ENCODE measurements at regions of chr13 and their contacts with region 1.

Region 1: GRCh38 chr13:51797664-51798488 is 6.1 kb downstream of the DHRS12 start:
- DNase-seq: peak; percentile 83
- ATAC-seq: peak; percentile 69
- H3K4me3 ChIP-seq: no peak overlapping the region
- H3K27ac ChIP-seq: no peak overlapping the region
- H3K4me1 ChIP-seq: peaks cover 29% of the 10 kb centered on the region
- H3K27me3 ChIP-seq: no peaks in the 10 kb centered on the region
- CTCF ChIP-seq: peak; percentile 71

Region 2: GRCh38 chr13:51148952-51149573 is 648.8 kb before region 1 on chr13:
- CTCF ChIA-PET with region 1: interaction called, 5 read pairs
- POLR2A ChIA-PET with region 1: no interaction called
- intact Hi-C with region 1: loop called (anchors 5 kb)
- DNase-seq: peak; percentile 50
- ATAC-seq: peak; percentile 87
- H3K4me3 ChIP-seq: no peak overlapping the region
- H3K27ac ChIP-seq: no peak overlapping the region
- H3K4me1 ChIP-seq: no peaks in the 10 kb centered on the region
- H3K27me3 ChIP-seq: peaks cover 17% of the 10 kb centered on the region
- CTCF ChIP-seq: peak; percentile 72

Region 3: GRCh38 chr13:51435002-51435578 is 362.8 kb before region 1 on chr13:
- CTCF ChIA-PET with region 1: interaction called, 19 read pairs
- POLR2A ChIA-PET with region 1: interaction called, 3 read pairs
- intact Hi-C with region 1: loop called (anchors 1 kb)
- DNase-seq: peak; percentile 50
- ATAC-seq: no peak; the same call in 1 of the 2 replicates
- H3K4me3 ChIP-seq: no peak overlapping the region
- H3K27ac ChIP-seq: no peak overlapping the region
- H3K4me1 ChIP-seq: no peaks in the 10 kb centered on the region
- H3K27me3 ChIP-seq: no peaks in the 10 kb centered on the region
- CTCF ChIP-seq: peak; percentile 54

Measured in PC-3 (cell line).